ENCODE measurements at regions of chr4 and their contacts with region 1.

Region 1: DNA sequence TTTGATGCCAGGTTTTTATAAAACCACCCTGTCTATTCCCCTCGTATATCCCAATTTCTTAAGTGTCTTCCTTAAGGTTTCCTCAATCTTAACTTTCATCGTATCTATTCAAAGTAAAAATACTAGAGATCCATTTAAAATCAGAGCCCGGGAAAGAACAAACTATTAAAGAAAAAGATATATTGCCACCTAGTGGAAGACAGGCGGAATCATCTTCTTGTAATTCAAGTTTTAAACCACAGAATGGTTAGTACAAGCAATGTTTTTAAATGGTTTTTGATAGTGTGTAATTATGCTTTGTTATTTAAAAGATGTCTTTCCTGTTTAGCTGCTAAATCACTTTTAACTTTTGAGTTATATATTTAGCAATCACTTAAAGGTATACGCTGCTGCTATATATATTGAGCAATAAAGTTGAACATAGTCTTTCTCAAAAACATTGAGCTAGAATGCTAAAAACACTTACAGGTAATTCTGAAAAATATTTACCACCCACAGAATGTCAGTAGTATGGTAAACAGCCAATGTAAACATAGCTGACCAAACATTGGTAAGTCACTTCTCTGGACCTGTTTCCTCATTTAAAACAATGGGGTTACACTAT is 18.2 kb downstream of the PRDM8 start:
- DNase-seq: peak; percentile 20 to 49 (median 32)
- ATAC-seq: no peak
- H3K4me3 ChIP-seq: no peak overlapping the region
- H3K27ac ChIP-seq: no peak overlapping the region
- H3K4me1 ChIP-seq: peaks cover 0 to 21% of the 10 kb centered on the region in 2 experiments; a peak in 4 of 5 replicates
- H3K27me3 ChIP-seq: no peaks in the 10 kb centered on the region
- CTCF ChIP-seq: peak in 2 of 3 experiments; percentile 37 to 72; a peak in 4 of 6 replicates
- EP300 ChIP-seq: no peak
- POLR2A ChIP-seq: no peak
- RAD21 ChIP-seq: peak; percentile 82 to 87

Region 2: GRCh38 chr4:79042079-79042674 is 1173.4 kb before region 1 on chr4:
- CTCF ChIA-PET with region 1: no interaction called
- POLR2A ChIA-PET with region 1: no interaction called
- in situ Hi-C with region 1: no loop called
- intact Hi-C with region 1: loop called (anchors 5 kb)
- DNase-seq: peak; percentile 13 to 69 (median 38)
- ATAC-seq: peak; percentile 84
- H3K4me3 ChIP-seq: no peak overlapping the region
- H3K27ac ChIP-seq: no peak overlapping the region
- H3K4me1 ChIP-seq: peaks cover 0 to 8% of the 10 kb centered on the region in 2 experiments; a peak in 1 of 5 replicates
- H3K27me3 ChIP-seq: no peaks in the 10 kb centered on the region
- CTCF ChIP-seq: peak; percentile 57 to 75 (median 58); a peak in 4 of 6 replicates
- EP300 ChIP-seq: no peak
- POLR2A ChIP-seq: no peak
- RAD21 ChIP-seq: peak; percentile 82 to 91

Region 3: GRCh38 chr4:79917246-79917645 is 298.3 kb before region 1 on chr4:
- CTCF ChIA-PET with region 1: no interaction called
- POLR2A ChIA-PET with region 1: no interaction called
- in situ Hi-C with region 1: no loop called
- intact Hi-C with region 1: loop called (anchors 2 kb)
- DNase-seq: peak; percentile 39 to 73 (median 44)
- ATAC-seq: peak; percentile 97
- H3K4me3 ChIP-seq: no peak overlapping the region
- H3K27ac ChIP-seq: no peak overlapping the region
- H3K4me1 ChIP-seq: no peaks in the 10 kb centered on the region
- H3K27me3 ChIP-seq: no peaks in the 10 kb centered on the region
- CTCF ChIP-seq: peak; percentile 55 to 63 (median 61)
- EP300 ChIP-seq: no peak
- POLR2A ChIP-seq: no peak
- RAD21 ChIP-seq: peak; percentile 17 to 45; a peak in 3 of 4 replicates

Region 4: DNA sequence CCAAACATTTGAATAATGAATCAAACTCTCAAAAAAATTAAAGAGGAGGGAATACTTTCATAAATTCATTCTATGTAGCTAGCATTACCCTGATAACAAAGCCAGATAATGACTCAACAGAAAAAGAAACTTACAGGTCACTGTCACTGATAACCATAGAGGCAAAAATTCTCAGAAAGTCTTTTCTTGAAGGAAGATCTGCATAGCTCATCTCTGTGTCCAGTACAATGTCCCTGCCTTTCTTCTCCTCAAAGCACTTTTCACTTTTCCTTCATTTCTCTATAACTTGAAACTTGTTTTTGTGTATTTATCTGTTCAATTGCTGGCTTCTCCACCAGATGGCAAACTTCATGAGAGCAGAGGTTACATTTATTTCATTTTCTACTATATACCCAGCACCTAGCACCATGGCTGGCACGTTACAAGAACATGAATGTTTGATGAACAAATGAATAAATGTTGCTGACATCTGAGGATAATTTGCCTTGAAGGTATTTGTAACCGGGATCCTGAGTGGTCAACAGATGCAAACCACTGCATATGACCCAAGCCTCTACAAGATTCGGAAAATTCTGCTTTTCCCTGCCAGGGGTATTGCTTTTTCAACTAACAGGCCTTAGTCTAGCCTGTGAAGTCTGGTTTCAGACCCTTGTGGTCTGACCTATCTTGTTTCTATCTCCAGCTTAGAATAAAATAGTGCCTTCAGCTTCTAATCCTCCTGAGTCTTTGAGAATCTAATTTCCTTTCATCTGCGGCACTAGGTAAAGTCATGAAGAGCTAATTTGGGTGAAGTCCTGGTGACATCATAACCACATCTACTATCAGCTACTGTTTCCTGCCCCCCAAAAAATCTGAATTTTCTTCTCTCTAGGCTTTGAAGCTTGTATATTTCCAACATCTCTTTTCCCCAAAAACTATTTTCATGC is 90.0 kb before region 1 on chr4:
- CTCF ChIA-PET with region 1: interaction called, 6 read pairs
- POLR2A ChIA-PET with region 1: interaction called, 3 read pairs
- in situ Hi-C with region 1: no loop called
- intact Hi-C with region 1: loop called (anchors 2 kb)
- DNase-seq: peak; percentile 28 to 76 (median 44)
- ATAC-seq: peak; percentile 74
- H3K4me3 ChIP-seq: peak overlapping the region; percentile 36
- H3K27ac ChIP-seq: peak overlapping the region; percentile 90
- H3K4me1 ChIP-seq: peaks cover 0 to 37% of the 10 kb centered on the region in 2 experiments; a peak in 4 of 5 replicates
- H3K27me3 ChIP-seq: no peaks in the 10 kb centered on the region
- CTCF ChIP-seq: peak; percentile 37 to 59 (median 50); a peak in 5 of 6 replicates
- EP300 ChIP-seq: peak; percentile 85; the same call in 1 of the 2 replicates
- POLR2A ChIP-seq: no peak
- RAD21 ChIP-seq: peak; percentile 52 to 57; a peak in 3 of 4 replicates

Region 5: GRCh38 chr4:80161413-80162058 is 54.0 kb before region 1 on chr4:
- CTCF ChIA-PET with region 1: no interaction called
- POLR2A ChIA-PET with region 1: no interaction called
- in situ Hi-C with region 1: no loop called
- intact Hi-C with region 1: loop called (anchors 5 kb)
- DNase-seq: peak in 2 of 4 experiments; percentile 67 to 83
- ATAC-seq: peak; percentile 64
- H3K4me3 ChIP-seq: 0 out of 2 replicates have a peak overlapping the region, but pooled peaks have one; percentile 14
- H3K27ac ChIP-seq: peak overlapping the region; percentile 77
- H3K4me1 ChIP-seq: peaks cover 0 to 15% of the 10 kb centered on the region in 2 experiments; a peak in 4 of 5 replicates
- H3K27me3 ChIP-seq: no peaks in the 10 kb centered on the region
- CTCF ChIP-seq: no peak
- EP300 ChIP-seq: peak; percentile 72; the same call in 1 of the 2 replicates
- POLR2A ChIP-seq: no peak
- RAD21 ChIP-seq: no peak